Kidney (tissue), 22 donors: ENCODE measurements at regions of chr11 and their contacts with region 1.

Region 1: GRCh38 chr11:65888163-65888814 is at the start of gene FIBP:
- DNase-seq: peak; percentile 98 to 99 (median 99)
- H3K4me3 ChIP-seq: peak within 1 kb of the TSS; percentile 65 to 95 (median 78)
- H3K27ac ChIP-seq: peak within 1 kb of the TSS; percentile 90 to 96
- H3K4me1 ChIP-seq: peaks cover 0 to 39% (median 8%) of the 10 kb centered on the region in 3 donors
- H3K27me3 ChIP-seq: no peaks in the 10 kb centered on the region
- CTCF ChIP-seq: peak; percentile 69
- total RNA-seq, gene FIBP: 58.0 TPM

Region 2: DNA sequence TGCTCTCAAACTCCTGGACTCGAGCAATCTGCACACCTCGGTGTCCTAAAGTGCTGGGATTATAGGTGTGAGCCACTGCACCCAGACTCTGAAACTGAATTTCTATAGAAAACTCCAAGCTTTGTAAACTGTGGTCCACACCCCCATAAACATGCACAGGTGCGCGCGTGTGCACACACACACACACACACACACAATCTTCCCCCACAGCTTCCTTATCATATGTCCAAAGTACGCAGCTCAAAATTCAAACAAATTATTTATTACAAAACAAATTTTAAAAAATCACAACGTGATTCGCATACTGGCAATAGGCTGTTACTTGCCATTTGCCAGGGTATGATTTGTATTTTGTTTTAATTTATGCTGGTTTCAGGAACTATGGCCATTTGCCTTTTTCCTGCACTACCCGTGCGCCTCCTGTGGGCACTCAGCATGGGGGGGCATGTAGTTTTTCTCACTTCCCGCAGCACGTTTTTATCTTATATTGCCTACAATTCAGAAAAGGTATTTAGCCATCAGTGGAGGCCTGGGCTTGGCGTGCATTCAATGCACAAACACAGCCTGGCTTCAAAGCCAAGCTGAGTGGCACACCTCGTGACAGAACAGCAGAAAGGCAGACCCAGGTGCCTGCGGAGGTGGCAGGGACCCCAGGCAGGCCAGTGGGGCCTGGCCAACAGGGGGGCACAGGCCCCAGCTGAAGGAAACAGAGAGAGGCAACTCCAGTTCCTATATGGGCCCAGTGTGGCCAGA is 65.3 kb before region 1 on chr11:
- intact Hi-C with region 1: no loop called
- DNase-seq: no peak
- H3K4me3 ChIP-seq: no peak overlapping the region
- H3K27ac ChIP-seq: no peak overlapping the region
- H3K4me1 ChIP-seq: peaks cover 0 to 8% (median 8%) of the 10 kb centered on the region in 3 donors
- H3K27me3 ChIP-seq: no peaks in the 10 kb centered on the region
- CTCF ChIP-seq: no peak

Region 3: GRCh38 chr11:65988791-65989592 is 100.7 kb after region 1 on chr11:
- intact Hi-C with region 1: loop called (anchors 10 kb)
- DNase-seq: peak; percentile 77 to 97 (median 95)
- H3K4me3 ChIP-seq: no peak overlapping the region
- H3K27ac ChIP-seq: no peak overlapping the region
- H3K4me1 ChIP-seq: no peaks in the 10 kb centered on the region
- H3K27me3 ChIP-seq: no peaks in the 10 kb centered on the region
- CTCF ChIP-seq: peak; percentile 99

Region 4: GRCh38 chr11:66106786-66107599 is 218.7 kb after region 1 on chr11:
- intact Hi-C with region 1: no loop called
- DNase-seq: no peak
- H3K4me3 ChIP-seq: no peak overlapping the region
- H3K27ac ChIP-seq: no peak overlapping the region
- H3K4me1 ChIP-seq: peaks cover 0 to 4% (median 0%) of the 10 kb centered on the region in 3 donors
- H3K27me3 ChIP-seq: no peaks in the 10 kb centered on the region
- CTCF ChIP-seq: no peak